ENCODE measurements at regions of chr17 and their contacts with region 1.

Region 1: GRCh38 chr17:40287494-40288369 is at the start of gene CDC6:
- DNase-seq: peak; percentile 98 to 99 (median 99)
- H3K4me3 ChIP-seq: peak within 1 kb of the TSS; percentile 41 to 91 (median 66)
- H3K27ac ChIP-seq: peak within 1 kb of the TSS in 49 of 59 donors; percentile 3 to 83 (median 66)
- H3K27me3 ChIP-seq: no peaks in the 10 kb centered on the region
- CTCF ChIP-seq: peak in 42 of 56 donors; percentile 10 to 69 (median 38)
- total RNA-seq, gene CDC6: 1.0 to 12.6 (median 6.7) TPM

Region 2: DNA sequence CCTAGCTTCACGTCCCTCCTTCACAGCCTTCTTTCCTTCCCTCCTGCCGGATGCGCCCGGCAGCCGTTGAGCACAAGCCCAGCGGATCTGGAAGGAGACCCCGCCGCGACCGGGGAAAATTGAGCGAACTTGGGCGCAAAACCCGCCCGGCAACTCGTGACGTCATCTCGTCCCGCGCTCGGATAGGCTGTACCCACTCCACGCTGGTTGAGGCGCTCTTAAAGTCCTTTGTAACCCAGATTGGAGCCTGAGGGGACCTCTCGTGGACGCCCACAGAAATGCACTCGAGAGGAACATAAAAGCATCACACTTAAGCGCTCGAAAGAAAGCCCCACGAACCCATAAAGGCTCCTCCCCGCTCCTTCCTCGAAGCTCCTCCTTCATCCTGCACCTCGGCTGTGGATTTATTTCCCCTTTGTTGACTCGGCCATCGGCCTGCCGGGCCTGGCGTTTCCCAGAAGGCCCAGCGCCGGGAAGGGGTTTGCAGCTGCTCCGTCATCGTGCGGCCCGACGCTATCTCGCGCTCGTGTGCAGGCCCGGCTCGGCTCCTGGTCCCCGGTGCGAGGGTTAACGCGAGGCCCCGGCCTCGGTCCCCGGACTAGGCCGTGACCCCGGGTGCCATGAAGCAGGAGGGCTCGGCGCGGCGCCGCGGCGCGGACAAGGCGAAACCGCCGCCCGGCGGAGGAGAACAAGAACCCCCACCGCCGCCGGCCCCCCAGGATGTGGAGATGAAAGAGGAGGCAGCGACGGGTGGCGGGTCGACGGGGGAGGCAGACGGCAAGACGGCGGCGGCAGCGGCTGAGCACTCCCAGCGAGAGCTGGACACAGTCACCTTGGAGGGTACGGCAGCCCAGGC is 307.2 kb before region 1 on chr17 and contains the start of gene PSMD3:
- intact Hi-C with region 1: loop called in 1 of 2 experiments (anchors 10 kb)
- DNase-seq: peak; percentile 98 to 100 (median 99)
- H3K4me3 ChIP-seq: peak within 1 kb of the TSS; percentile 55 to 100 (median 98)
- H3K27ac ChIP-seq: peak within 1 kb of the TSS; percentile 44 to 97 (median 91)
- H3K27me3 ChIP-seq: no peaks in the 10 kb centered on the region
- CTCF ChIP-seq: peak; percentile 69 to 95 (median 86)
- total RNA-seq, gene PSMD3: 70.5 to 136 (median 98.5) TPM

Region 3: DNA sequence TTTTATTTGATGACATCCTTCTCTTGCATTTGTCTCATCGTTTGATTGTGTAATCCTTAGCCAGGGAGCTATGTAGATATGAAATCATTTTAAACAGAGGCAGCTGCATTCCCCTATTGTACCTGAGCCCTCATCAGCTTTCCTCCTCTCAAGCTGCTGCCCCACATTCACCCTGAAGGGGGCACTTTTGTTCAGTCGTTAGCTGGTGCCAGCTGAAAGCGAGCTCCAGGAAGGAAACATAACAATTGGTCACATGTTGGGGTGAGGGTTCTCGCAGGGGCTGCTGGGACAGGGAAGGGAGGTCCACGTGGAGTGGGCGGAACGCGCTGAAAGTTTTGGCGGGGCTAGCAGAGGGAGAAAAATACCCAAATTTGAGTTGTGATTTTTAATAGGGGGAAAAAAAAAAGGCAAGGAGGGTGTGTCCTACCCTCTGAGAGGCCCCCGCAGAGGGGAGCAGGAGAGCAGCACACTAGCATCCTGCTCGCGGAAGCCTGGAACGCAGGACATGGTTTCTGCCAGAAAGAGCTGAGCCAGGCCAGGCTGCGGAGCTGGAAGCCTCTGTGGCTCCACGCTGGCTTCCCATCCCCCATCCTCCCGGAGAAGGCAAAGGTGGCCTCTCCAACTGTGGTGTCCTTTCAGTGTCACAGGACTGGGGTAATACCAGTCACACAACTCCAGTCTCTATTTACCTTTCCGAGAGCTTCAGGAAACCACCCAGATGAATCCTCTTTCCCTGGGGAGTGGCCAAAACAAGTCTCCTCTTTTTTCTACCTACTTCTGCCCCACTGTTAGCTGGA is 174.4 kb before region 1 on chr17:
- intact Hi-C with region 1: loop called in 1 of 2 experiments (anchors 10 kb)
- DNase-seq: peak; percentile 91 to 97 (median 94)
- H3K4me3 ChIP-seq: peak overlapping the region; percentile 26 to 79 (median 62)
- H3K27ac ChIP-seq: peak overlapping the region; percentile 14 to 100 (median 98)
- H3K27me3 ChIP-seq: no peaks in the 10 kb centered on the region
- CTCF ChIP-seq: peak; percentile 75 to 100 (median 99)

Region 4: DNA sequence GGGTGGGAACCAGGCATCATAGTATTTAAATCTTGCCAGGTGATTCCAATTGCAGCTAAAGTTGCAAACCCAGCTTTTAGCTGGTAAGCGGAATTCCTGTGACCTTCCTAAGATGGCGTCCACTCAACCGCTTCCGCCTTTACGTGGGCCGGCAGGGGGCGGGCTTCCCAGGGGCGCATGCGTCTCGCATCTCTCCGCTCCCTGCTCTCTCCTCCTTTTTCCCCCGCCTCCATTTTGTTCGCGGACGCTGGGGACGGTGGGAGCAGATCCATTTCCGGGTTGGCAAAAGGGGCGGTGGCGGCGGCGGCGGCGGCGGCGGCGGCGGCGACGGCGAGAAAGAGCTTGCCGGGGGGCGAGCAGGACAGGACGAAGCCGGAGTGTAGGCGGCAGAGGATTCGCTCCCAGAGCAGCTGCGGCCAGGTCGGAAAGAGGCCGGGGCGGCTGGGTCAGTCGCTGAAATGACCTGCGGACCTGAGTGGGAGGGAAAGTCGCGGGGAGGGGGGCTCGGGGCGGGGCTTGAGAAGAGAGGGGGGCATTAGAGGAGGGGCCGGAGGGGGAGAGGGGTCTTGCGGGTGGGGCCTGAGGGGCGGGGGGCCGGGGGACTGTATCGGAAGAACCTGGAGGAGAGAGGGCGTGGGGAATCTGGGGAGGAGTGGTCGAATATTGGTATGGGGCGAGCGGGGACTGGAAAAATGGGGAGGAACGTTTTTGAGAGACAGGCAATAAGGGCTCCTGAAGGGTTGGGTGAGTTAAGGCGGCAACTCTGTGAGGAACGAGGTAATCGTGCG is 68.5 kb before region 1 on chr17 and contains the start of gene WIPF2:
- intact Hi-C with region 1: loop called (anchors 1 to 2 kb)
- DNase-seq: peak; percentile 88 to 97 (median 95)
- H3K4me3 ChIP-seq: peak within 1 kb of the TSS; percentile 44 to 88 (median 75)
- H3K27ac ChIP-seq: peak within 1 kb of the TSS; percentile 67 to 98 (median 94)
- H3K27me3 ChIP-seq: no peaks in the 10 kb centered on the region
- CTCF ChIP-seq: peak; percentile 64 to 95 (median 80)
- total RNA-seq, gene WIPF2: 48.9 to 103 (median 73.2) TPM

Region 5: DNA sequence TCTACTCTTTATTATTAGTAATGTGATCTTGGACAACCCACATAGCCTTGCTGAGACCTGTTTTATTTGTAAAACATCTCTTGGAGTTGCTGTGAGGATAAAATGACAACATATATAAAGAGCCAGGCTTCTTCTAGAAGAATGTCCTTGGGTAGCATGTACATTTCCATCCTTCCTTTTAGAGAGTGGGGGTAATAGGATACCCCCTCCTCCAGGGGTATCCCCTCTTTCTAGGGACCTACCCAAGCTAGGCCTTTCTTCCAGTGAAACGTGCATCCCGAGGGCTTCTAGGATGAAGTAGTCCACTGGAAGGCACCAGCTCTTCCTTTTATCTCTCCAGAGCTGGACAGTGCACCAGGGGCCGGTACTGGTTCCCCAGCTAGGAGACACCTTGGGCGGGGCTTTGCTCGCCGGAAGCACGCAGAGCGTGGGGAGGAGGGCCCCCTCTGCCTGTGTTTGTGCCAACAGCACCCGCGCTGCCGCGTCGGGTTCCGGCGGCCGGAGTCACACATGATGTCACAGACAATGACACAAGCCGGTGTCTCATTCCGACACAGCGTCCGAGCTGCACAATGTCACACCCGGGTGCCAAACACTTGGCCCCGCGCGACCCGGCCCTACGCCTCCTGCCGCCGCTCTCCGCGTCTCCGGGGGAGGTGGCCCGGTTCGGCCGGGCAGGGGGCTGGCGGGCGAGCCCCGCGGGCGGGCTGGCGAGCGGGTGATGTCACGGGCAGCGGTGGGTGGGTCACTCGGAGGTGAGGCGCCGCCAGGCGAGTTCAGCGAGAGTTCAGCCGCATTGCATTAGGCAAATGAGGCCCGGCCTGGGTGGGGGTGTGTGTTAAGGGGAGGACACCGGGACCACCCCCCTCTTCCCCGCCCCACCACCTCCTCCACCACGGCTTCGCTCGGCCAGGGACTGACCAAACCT is 53.4 kb after region 1 on chr17:
- intact Hi-C with region 1: no loop called
- DNase-seq: peak; percentile 55 to 89 (median 78)
- H3K4me3 ChIP-seq: peak overlapping the region; percentile 46 to 85 (median 72)
- H3K27ac ChIP-seq: peak overlapping the region in 58 of 59 donors; percentile 23 to 92 (median 83)
- H3K27me3 ChIP-seq: no peaks in the 10 kb centered on the region
- CTCF ChIP-seq: peak in 11 of 56 donors; percentile 10 to 30 (median 20)

Measured in dorsolateral prefrontal cortex (tissue), 120 donors.